ENCODE measurements at regions of chr9 and their contacts with region 1.

Region 1: DNA sequence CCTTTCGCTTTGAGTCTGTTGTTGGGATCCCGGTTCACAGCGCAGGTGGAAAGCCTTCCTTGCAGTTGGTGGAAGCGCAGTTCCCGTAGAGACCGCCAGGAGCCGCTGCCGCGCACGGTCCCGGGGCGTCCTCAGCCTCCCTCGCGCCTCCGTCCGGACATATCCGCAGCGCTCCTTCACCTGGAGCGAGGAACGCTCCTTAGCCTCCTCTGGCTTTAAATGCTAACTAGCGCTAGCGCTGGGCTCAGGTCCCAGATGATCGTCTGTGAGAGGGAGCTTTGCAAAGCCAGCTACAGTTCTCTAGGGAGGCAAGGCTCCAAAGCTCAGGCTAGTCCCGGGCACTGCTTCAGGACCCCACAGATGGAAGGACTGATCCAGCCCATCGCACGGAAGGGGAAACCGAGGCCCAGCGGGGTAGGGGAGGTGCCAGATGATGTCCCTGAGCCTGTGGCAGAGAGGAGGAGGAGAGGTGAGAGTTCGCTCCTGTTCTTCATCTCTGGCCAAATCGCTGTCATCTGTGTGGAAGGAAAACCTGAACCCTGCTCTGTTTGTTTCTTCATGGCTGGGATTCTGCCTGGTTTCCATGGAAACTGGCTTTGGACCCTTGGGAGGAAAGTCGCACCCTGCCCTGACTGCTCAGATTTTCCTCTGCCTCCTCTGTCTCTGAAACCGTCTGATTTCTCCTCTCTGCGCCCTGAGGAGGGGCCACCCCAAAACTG is 31.4 kb downstream of the COL15A1 start:
- DNase-seq: peak; percentile 34
- H3K4me3 ChIP-seq: peak overlapping the region; percentile 48
- H3K27ac ChIP-seq: peak overlapping the region; percentile 11
- H3K27me3 ChIP-seq: peaks cover 21% of the 10 kb centered on the region
- CTCF ChIP-seq: peak; percentile 99

Region 2: GRCh38 chr9:98215821-98216220 is 759.3 kb before region 1 on chr9:
- CTCF ChIA-PET with region 1: no interaction called
- POLR2A ChIA-PET with region 1: no interaction called
- DNase-seq: no peak
- H3K4me3 ChIP-seq: no peak overlapping the region
- H3K27ac ChIP-seq: peak overlapping the region; percentile 22
- H3K27me3 ChIP-seq: no peaks in the 10 kb centered on the region
- CTCF ChIP-seq: peak; percentile 48

Region 3: GRCh38 chr9:98848450-98849149 is 126.6 kb before region 1 on chr9:
- CTCF ChIA-PET with region 1: interaction called, 32 read pairs
- POLR2A ChIA-PET with region 1: no interaction called
- DNase-seq: peak; percentile 90
- H3K4me3 ChIP-seq: peak overlapping the region; percentile 11
- H3K27ac ChIP-seq: peak overlapping the region; percentile 32
- H3K27me3 ChIP-seq: peaks cover 15% of the 10 kb centered on the region
- CTCF ChIP-seq: peak; percentile 96

Region 4: DNA sequence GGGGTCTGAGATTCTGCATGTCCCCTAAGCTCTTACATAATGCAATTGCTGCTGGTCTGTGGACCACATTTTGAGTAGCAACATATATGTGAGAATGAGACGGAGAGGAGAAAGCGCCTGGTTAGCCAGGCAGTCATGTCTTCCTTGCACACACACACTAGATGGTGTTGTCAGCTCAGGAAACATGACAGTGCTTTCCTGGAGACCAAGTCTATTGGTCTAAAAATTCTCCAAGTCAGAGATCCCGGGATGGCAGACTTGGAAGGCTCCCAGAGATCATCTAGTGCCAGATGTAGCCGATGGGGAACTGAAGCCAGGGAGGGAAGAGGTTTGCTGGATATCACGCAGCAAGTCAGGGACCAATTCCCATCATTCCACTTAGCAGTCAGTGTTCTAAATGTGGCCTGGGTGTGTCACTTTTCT is 114.3 kb before region 1 on chr9:
- CTCF ChIA-PET with region 1: interaction called, 28 read pairs
- POLR2A ChIA-PET with region 1: no interaction called
- DNase-seq: peak; percentile 77
- H3K4me3 ChIP-seq: no peak overlapping the region
- H3K27ac ChIP-seq: no peak overlapping the region
- H3K27me3 ChIP-seq: peaks cover 6% of the 10 kb centered on the region
- CTCF ChIP-seq: peak; percentile 67

Region 5: GRCh38 chr9:98899408-98900056 is 75.6 kb before region 1 on chr9:
- CTCF ChIA-PET with region 1: interaction called, 11 read pairs
- POLR2A ChIA-PET with region 1: no interaction called
- DNase-seq: peak; percentile 75
- H3K4me3 ChIP-seq: no peak overlapping the region
- H3K27ac ChIP-seq: no peak overlapping the region
- H3K27me3 ChIP-seq: no peaks in the 10 kb centered on the region
- CTCF ChIP-seq: no peak

Region 6: GRCh38 chr9:98958271-98958984 is 16.7 kb before region 1 on chr9:
- CTCF ChIA-PET with region 1: interaction called, 46 read pairs
- POLR2A ChIA-PET with region 1: interaction called, 5 read pairs
- DNase-seq: peak; percentile 94
- H3K4me3 ChIP-seq: no peak overlapping the region; the same call in 1 of the 2 replicates
- H3K27ac ChIP-seq: peak overlapping the region; percentile 90
- H3K27me3 ChIP-seq: no peaks in the 10 kb centered on the region
- CTCF ChIP-seq: 0 out of 2 replicates have a peak, but pooled peaks have one; percentile 14

Region 7: GRCh38 chr9:98989036-98990000 is 14.2 kb after region 1 on chr9:
- CTCF ChIA-PET with region 1: interaction called, 30 read pairs
- POLR2A ChIA-PET with region 1: no interaction called
- DNase-seq: peak; percentile 94
- H3K4me3 ChIP-seq: no peak overlapping the region
- H3K27ac ChIP-seq: peak overlapping the region; percentile 78
- H3K27me3 ChIP-seq: peaks cover 8% of the 10 kb centered on the region
- CTCF ChIP-seq: peak; percentile 32

Region 8: DNA sequence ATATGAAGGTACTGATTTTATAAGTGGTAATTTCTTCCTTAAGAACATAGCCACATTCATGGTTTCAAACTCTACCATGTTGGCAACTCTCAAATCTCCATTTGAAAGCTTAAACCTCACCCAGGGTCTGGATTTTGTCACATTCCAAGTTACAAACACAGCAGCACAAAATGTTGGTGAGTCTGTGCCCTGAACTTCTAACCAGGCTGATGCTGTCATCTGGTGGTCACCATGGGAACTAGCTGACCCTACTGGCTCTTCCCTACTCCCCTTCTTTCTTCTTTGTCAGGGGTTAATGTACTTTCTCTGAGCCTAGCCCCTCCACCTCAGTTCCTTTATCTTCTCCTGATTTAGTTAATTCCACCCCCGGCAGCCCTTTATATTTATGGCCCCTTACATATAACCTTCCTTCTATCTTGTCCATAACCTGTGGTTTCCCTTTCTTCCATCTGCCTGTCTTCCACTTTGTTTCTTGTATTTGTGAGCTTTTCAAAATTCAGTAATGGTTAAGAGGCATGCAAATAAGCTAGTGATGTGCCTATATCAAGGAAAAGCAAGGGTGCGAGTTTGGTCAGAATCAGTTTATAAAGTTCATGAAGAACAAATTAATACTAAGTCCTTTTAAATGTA is 165.6 kb after region 1 on chr9:
- CTCF ChIA-PET with region 1: interaction called, 12 read pairs
- POLR2A ChIA-PET with region 1: no interaction called
- DNase-seq: peak; percentile 34
- H3K4me3 ChIP-seq: no peak overlapping the region
- H3K27ac ChIP-seq: no peak overlapping the region
- H3K27me3 ChIP-seq: no peaks in the 10 kb centered on the region
- CTCF ChIP-seq: peak; percentile 92

Measured in AG04450 (cell line).